Head of caudate nucleus (tissue), 42 donors: ENCODE measurements at regions of chr7 and their contacts with region 1.

Region 1: DNA sequence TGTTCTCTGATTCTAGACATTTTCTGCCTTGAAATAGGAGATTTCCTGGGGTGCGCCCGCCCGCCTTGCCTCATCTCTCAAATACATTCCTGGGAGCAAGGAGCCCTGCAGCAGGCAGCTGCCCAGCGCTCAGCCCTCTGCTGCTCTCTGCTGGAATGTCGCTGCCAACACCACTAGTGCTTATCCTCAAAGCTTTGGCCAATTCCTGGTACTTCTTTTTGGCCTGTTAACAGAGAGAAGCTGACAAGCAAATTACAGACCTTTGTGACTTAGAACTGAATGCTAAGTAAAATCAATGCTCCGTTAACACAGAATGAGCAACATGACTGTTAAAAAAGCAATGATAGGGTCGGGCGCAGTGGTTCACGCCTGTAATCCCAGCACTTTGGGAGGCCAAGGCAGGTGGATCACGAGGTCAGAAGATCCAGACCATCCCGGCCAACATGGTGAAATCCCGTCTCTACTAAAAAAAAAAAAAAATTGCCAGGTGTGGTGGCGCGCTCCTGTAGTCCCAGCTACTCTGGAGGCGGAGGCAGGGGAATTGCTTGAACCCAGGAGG is 41.9 kb upstream of the SYPL1 start:
- DNase-seq: peak; percentile 68 to 95 (median 90)

Region 2: DNA sequence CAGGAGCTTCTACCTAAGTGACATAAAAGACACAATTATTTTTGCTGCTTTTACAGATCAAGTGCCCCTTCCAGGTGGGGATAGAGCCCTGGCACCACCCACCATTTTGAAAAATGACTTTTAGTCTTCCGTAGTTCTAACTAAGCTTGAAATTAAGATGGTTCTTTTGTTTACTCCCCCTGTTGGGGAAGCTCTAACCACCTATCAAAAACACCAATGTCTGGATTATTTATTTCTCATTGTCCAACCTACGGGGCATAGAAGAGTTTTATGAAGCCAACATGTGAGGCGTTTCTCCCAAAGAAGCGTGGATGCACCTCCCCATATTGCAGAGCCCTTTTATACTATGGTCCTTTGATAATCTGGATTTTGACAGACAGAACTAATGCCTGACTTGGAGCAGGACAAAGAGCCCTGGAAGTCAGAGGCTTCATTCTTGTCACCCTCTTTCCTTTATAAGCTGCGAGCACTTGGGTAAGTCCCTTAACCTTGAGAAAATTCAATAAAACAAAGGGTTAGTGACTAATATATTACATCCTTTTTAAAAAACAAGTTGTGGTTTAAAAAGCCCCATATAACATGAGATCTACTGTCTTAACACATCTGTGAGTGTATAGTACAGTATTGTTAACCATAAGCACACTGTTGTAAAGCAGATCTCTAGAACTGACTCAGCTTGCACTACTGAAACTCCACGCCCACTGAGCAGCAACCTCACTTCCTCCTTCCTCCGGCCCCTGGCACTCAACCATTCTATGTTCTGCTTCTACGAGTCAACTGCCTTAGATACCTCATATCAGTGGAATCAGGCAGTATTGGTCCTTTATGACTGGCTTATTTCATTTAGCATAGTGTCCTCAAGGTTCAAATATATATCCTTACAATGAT is 345.0 kb before region 1 on chr7:
- intact Hi-C with region 1: no loop called
- DNase-seq: peak in 10 of 42 donors; percentile 10 to 52 (median 19)

Region 3: GRCh38 chr7:106056513-106057203 is 97.3 kb before region 1 on chr7:
- intact Hi-C with region 1: loop called (anchors 2 kb)
- DNase-seq: peak; percentile 46 to 92 (median 78)

Region 4: DNA sequence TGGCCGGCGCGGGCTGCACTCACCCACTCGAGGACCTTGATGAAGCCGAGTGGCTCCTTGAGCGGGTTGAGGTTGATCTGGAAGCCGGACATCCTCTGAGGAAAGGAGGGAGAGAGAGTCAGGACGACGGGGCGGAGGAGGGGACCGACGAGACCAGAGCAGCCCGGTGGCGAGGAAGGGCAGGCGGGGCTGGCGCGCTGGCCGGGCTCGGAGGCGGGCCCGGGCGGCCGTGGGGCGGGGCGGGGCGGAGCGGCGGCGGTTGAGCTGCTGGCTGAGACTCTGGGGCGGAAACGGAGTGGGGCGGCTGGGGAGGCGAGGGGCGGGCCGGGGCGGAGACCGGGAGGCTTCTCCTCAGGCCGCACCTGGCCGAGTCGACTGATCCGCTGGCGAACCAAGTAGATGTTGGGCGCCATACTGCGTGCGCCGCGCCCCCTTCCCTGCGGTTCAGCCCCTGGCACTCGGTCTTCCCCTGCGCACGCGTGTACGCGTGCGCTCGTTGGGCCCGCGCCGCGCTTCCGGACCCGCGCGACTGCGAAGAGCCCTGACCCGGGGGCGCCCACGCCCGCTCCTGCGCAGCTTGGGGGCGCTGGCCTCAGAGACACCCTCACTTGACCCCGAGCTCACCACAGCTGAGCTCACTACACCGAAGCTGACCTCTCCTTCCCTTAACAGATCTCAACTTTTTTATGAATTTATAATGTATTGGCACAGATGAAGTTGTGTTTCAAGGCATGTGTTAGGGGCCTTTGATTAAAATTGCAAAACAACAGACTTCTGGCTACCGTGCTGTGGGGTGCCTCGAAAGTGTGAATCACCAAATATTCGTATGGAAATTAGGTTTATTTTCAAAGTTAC is 41.6 kb before region 1 on chr7 and contains the start of gene SYPL1:
- intact Hi-C with region 1: loop called (anchors 5 kb)
- DNase-seq: peak; percentile 62 to 95 (median 90)